ENCODE measurements at regions of chr9 and their contacts with region 1.

Region 1: DNA sequence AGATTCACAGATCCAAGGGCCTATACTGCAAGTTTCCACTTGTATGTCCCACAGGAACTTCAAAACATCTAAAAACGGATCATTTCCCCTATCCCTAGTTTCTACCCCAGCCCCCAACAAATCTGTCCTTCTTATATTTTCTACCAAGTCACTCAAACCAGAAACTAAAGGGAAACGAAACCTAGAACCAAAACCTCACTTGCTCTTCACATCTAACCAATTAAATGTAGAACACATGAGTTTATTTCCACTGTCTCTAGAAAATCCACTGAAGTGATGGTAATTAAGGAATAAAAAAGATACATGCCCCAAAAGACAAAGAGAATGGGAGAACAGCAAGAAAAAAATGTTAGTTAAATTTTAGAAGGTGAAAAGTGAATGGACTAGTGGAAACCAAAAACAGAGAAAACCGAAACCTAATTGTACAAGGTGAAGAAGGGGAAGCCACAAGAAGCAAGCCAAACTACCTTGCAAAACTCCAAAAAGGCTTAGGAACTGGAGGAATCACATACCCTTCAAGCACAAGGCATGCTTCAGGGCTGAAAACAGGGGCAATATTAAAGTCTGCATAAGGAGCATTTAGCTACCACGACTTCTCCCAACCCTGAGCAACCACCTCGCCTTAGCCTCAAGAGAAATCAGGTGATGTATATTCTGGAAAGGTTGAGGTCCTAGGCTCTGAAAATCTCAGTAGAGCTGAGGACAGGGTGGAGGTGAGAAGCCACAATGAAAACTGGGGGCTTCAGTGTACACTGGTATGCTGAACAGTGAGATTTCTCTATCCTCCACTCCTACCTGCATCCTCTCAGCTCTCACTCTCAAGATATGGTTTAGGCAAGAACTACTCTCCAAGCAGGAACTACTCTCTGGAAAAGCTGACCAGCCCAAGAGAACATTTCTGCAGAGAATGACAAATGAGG is 11.1 kb downstream of the SMU1 start:
- DNase-seq: no peak
- ATAC-seq: no peak; a peak in 1 of 6 replicates
- H3K4me3 ChIP-seq: no peak overlapping the region
- H3K27ac ChIP-seq: no peak overlapping the region
- H3K4me1 ChIP-seq: no peaks in the 10 kb centered on the region
- CTCF ChIP-seq: no peak
- EP300 ChIP-seq: no peak
- POLR2A ChIP-seq: no peak
- RAD21 ChIP-seq: no peak

Region 2: GRCh38 chr9:33044127-33044673 is 21.2 kb before region 1 on chr9:
- CTCF ChIA-PET with region 1: interaction called, 22 read pairs
- POLR2A ChIA-PET with region 1: interaction called, 3 read pairs
- DNase-seq: peak; percentile 87 to 94
- ATAC-seq: peak; percentile 90 to 91
- H3K4me3 ChIP-seq: peak overlapping the region; percentile 54
- H3K27ac ChIP-seq: peak overlapping the region; percentile 79 to 86
- H3K4me1 ChIP-seq: peaks cover 31% of the 10 kb centered on the region
- CTCF ChIP-seq: no peak
- EP300 ChIP-seq: no peak
- POLR2A ChIP-seq: peak; percentile 37
- RAD21 ChIP-seq: no peak; a peak in 1 of 5 replicates

Measured in A549 (cell line).